Lower leg skin (tissue), 4 donors: ENCODE measurements at regions of chr10 and their contacts with region 1.

Region 1: GRCh38 chr10:80938903-80939302 is 401.2 kb downstream of the SH2D4B start:
- DNase-seq: no peak
- H3K4me3 ChIP-seq: no peak overlapping the region
- CTCF ChIP-seq: no peak
- POLR2A ChIP-seq: no peak

Region 2: GRCh38 chr10:79127151-79127961 is 1811.5 kb before region 1 on chr10:
- intact Hi-C with region 1: loop called (anchors 10 kb)
- DNase-seq: peak; percentile 62 to 95
- H3K4me3 ChIP-seq: no peak overlapping the region
- CTCF ChIP-seq: no peak
- POLR2A ChIP-seq: no peak

Region 3: GRCh38 chr10:80924063-80924952 is 14.6 kb before region 1 on chr10:
- intact Hi-C with region 1: no loop called
- DNase-seq: no peak
- H3K4me3 ChIP-seq: no peak overlapping the region
- CTCF ChIP-seq: no peak
- POLR2A ChIP-seq: no peak

Region 4: DNA sequence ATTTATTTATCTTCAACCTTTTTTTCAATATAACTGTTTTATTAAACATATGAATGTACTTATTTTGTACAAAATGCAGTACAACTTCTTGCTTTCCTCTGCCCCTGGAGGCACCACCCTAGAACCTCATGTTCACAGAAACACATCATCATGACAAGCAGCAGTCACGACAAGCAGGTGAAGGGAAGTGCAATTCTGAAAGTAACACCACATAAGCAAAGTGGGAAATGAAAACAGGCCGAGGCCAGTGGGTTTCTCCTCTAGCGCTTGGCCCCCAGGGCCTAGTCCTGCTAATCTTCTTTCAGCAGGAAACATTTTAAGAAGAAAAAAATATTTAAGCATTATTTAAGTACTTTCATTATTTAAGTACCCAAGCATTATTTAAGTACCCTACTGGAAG is 196.9 kb after region 1 on chr10:
- intact Hi-C with region 1: no loop called
- DNase-seq: no peak
- H3K4me3 ChIP-seq: no peak overlapping the region
- CTCF ChIP-seq: no peak
- POLR2A ChIP-seq: no peak

Region 5: DNA sequence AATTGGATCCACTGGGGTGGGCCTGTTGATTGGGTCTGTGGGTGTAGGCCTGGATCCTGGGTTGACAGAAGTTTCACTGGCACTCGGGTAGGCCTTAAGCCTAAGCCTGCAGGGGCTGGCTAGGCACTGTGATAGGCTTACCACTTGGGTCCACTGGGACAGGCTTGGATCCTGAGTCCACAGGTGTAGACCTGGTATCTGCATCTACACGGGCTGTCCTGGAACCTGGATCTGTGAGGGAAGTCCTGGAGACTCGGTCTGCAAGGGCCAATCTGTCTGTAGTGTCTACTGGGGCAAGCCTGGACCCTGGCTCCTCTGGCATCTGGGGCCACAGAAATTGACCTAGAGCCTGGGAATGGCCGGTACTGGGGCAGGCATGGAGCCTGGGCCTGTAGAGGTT is 717.1 kb after region 1 on chr10:
- intact Hi-C with region 1: no loop called
- DNase-seq: no peak
- H3K4me3 ChIP-seq: no peak overlapping the region
- CTCF ChIP-seq: no peak
- POLR2A ChIP-seq: no peak